ENCODE measurements at regions of chr22 and their contacts with region 1.

Region 1: GRCh38 chr22:29245637-29246385 is 22.0 kb downstream of the RHBDD3 start:
- DNase-seq: peak; percentile 64
- H3K4me3 Mint-ChIP-seq: no peak overlapping the region
- H3K27ac Mint-ChIP-seq: no peak overlapping the region
- H3K4me1 Mint-ChIP-seq: no peaks in the 10 kb centered on the region
- H3K27me3 Mint-ChIP-seq: peaks cover 14% of the 10 kb centered on the region
- CTCF ChIP-seq: peak; percentile 95

Region 2: GRCh38 chr22:28600546-28601143 is 645.2 kb before region 1 on chr22:
- CTCF ChIA-PET with region 1: interaction called, 40 read pairs
- POLR2A ChIA-PET with region 1: interaction called, 4 read pairs
- intact Hi-C with region 1: no loop called
- DNase-seq: peak; percentile 56
- H3K4me3 Mint-ChIP-seq: no peak overlapping the region
- H3K27ac Mint-ChIP-seq: no peak overlapping the region
- H3K4me1 Mint-ChIP-seq: no peaks in the 10 kb centered on the region
- H3K27me3 Mint-ChIP-seq: peaks cover 21% of the 10 kb centered on the region
- CTCF ChIP-seq: peak; percentile 41

Region 3: DNA sequence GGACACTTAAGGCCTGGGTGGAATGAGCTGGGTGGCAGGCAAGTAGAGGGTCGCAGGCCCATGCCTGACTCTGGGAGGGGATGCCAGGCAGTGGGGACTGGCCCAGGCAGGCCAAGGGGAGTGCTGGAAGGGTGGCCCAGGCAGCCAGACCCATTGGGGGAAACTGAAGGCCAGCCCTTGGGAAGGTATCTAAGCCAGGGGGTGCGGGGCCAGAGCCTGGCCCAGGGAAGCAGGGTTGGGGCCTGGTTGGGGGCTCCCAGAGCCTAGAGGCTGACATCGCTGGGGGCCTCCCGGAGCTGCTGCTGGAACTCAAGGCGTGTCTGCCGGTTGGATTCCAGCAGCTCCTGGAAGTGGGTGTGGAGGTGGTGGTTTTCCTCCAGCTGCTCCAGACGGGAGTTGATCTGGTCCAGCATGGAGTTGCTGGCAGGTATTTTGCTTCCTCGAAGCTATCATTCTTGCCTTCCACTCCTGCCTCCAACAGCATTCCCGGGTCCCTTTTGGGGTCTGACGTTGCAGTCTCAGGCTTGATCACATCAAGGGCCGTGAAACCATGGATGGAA is 410.1 kb before region 1 on chr22:
- CTCF ChIA-PET with region 1: interaction called, 11 read pairs
- POLR2A ChIA-PET with region 1: no interaction called
- intact Hi-C with region 1: no loop called
- DNase-seq: no peak
- H3K4me3 Mint-ChIP-seq: no peak overlapping the region
- H3K27ac Mint-ChIP-seq: no peak overlapping the region
- H3K4me1 Mint-ChIP-seq: no peaks in the 10 kb centered on the region
- H3K27me3 Mint-ChIP-seq: no peaks in the 10 kb centered on the region
- CTCF ChIP-seq: no peak

Region 4: DNA sequence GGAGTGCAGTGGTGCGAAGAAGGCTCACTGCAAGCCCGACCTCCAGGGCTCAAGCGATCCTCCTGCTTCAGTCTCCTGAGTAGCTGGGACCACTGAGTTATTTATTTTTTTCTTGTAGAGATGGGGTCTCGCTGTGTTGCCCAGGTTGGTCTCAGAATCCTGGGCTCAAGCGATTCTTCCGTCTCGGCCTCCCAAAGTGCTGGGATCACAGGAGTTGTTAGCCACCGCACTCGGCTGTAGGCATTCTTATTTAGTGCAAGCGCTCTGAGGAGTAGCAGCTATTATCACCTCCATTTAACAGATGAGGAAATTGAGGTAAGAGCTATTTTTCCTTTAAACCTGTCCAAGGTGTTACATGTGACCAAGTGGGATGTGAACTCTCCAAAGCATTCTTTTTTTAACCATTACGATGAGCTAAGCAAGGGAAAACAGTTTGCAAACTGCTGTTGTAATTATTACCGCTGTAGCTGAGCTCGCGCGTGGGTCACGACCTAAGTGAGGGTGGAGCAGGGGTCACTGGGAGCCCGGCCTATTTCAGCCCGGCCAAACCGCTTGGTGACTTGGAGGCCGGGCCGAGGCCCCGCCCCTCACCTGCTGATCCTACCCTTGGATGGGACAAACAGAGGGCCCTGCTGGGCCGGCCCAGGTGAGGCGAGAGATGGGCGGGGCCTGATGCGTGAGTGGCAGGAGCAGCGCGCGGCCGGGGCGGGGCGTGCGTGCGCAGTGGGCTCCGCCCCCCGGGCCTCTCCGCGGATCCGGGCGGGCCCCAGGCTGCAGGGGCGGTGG is 173.4 kb before region 1 on chr22:
- CTCF ChIA-PET with region 1: interaction called, 10 read pairs
- POLR2A ChIA-PET with region 1: no interaction called
- intact Hi-C with region 1: no loop called
- DNase-seq: peak; percentile 92
- H3K4me3 Mint-ChIP-seq: peak overlapping the region; percentile 71
- H3K27ac Mint-ChIP-seq: no peak overlapping the region
- H3K4me1 Mint-ChIP-seq: peaks cover 6% of the 10 kb centered on the region
- H3K27me3 Mint-ChIP-seq: no peaks in the 10 kb centered on the region
- CTCF ChIP-seq: no peak

Region 5: GRCh38 chr22:29183971-29184848 is 61.6 kb before region 1 on chr22:
- CTCF ChIA-PET with region 1: no interaction called
- POLR2A ChIA-PET with region 1: no interaction called
- intact Hi-C with region 1: no loop called
- DNase-seq: no peak
- H3K4me3 Mint-ChIP-seq: no peak overlapping the region
- H3K27ac Mint-ChIP-seq: no peak overlapping the region
- H3K4me1 Mint-ChIP-seq: no peaks in the 10 kb centered on the region
- H3K27me3 Mint-ChIP-seq: peaks cover 17% of the 10 kb centered on the region
- CTCF ChIP-seq: no peak

Region 6: DNA sequence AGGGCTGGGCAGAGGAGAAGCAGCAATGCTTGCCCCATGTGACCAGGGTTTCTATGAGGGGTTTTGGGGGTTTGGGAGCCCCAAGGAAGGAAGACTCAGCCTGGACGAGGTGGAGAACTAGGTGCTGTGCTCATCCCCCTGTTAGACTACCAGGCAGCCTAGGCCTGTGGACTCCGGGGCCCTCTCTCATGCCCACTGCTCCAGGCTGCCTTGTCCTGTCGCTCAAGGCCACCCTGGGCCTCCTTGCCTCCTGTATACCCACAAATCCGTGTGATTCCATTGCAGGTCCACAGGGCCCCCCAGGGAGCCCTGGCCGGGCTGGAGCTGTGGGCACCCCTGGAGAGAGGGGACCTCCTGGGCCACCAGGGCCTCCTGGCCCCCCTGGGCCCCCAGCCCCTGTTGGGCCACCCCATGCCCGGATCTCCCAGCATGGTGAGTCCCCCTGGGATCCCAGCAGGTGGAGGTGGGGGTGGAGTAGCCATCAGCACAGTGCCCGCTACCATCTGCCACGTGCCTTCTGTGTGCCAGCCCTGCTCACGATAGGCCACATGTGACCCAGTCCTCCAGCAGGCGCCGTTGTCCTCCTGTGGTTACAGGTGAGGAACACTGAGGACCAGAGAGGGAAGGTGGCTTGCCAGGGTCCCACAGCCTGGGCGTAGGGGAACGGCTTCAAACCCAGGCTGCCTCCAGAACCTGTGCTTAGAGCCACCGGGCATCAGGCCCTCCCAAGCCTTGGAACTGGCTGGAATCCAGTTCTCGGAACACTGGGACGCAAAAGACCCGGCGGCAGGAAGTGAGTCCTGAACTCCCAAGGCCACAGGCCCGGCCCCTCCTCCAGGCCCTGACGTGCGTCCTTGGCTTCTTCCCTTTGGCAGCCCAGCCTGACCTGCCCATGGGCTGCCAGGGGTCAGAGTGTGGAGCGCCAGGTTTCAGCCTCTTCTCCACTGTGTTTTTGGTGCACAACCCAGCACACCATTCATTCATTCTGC is 13.5 kb before region 1 on chr22:
- CTCF ChIA-PET with region 1: interaction called, 18 read pairs
- POLR2A ChIA-PET with region 1: no interaction called
- intact Hi-C with region 1: no loop called
- DNase-seq: no peak
- H3K4me3 Mint-ChIP-seq: no peak overlapping the region
- H3K27ac Mint-ChIP-seq: no peak overlapping the region
- H3K4me1 Mint-ChIP-seq: no peaks in the 10 kb centered on the region
- H3K27me3 Mint-ChIP-seq: no peaks in the 10 kb centered on the region
- CTCF ChIP-seq: no peak

Region 7: DNA sequence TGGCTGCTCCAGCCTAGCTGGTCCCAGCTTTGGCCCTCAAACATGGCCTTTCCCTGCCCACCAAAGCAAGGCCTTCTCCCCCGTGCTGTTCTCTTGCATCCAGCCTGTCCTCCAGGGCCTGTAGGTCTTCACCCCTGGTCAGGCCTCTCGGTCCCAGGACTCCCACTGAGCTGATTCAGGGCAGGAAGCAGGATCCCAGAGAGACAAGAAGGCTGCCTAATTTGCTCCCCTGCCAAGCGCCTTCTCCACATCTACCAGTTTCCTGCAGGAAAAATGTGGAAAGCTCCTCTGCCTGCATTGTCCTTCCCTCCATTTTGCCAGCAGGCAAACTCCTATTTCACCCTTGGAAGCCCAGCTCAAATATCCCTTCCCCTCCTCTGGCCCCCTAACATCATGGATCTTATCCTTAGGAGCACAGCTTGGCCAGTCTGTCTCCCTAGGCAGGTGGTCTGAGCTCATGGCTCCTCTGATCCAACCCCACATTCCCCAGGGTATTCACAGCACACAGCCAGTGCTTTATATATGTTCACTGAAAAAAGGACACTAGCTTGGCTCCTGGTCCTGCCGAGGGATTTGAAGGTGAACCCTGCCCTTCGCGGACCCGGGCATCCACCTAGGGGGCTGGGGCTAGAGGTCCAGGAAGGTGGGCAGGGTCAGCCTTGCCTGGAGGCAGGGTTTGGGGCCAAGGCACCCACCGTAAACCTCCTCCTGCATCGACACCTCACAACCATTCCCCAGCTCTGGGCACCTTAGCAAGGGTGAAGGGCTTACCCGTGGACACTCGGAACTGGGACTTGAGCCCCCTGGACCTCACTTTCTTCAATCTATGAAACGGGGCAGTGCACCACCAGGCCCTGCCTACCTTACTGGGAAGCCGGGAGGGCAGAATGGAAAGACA is 21.0 kb after region 1 on chr22:
- CTCF ChIA-PET with region 1: interaction called, 13 read pairs
- POLR2A ChIA-PET with region 1: interaction called, 5 read pairs
- intact Hi-C with region 1: no loop called
- DNase-seq: peak; percentile 11
- H3K4me3 Mint-ChIP-seq: peak overlapping the region; percentile 88
- H3K27ac Mint-ChIP-seq: peak overlapping the region; percentile 99
- H3K4me1 Mint-ChIP-seq: peaks cover 24% of the 10 kb centered on the region
- H3K27me3 Mint-ChIP-seq: no peaks in the 10 kb centered on the region
- CTCF ChIP-seq: no peak

Measured in MCF 10A (cell line).